ENCODE measurements at regions of chr19 and their contacts with region 1.

Region 1: DNA sequence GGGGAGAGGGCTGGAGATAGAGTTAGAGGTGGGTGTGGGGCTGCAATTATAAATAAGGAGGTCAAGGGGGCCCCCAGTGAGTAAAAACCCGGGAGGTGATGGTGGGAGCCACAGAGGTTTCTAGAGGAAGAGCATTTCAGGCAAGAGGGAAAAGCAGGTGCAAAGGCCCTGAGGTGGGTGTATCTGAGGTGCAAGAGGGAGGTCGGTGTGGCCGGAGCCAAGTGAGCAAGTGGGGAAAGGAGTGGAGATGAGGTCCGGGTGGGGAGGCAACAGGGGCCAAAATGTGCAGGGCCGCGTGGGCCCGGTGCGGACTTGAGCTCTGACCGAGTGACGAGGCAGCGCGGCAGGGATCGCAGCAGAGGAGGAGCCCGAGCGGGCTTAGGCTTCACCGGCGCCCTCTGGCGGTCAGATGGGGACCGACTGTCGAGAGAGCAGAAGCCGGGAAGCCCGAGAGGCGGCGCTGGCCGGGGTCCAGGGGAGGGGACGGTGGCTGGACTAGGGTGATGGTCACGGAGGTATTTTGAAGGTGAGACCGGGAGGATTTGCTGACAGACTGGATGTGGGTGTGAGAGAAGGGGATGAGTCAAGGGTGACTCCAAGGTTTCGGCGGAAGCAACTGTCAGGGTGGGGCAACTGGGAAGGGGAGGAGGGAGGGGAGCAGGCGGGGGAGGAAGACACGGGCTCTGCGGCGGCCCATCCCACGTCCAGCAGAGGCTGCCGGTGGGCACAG is 17.7 kb upstream of the SPACA4 start:
- DNase-seq: peak; percentile 74
- H3K4me3 ChIP-seq: peak overlapping the region in 1 of 3 experiments; percentile 3
- H3K27ac ChIP-seq: no peak overlapping the region
- H3K4me1 ChIP-seq: no peaks in the 10 kb centered on the region
- H3K27me3 ChIP-seq: no peaks in the 10 kb centered on the region
- CTCF ChIP-seq: peak; percentile 97 to 98
- POLR2A ChIP-seq: no peak

Region 2: GRCh38 chr19:48271531-48272151 is 317.2 kb before region 1 on chr19:
- CTCF ChIA-PET with region 1: interaction called, 10 read pairs
- POLR2A ChIA-PET with region 1: no interaction called
- dilution Hi-C with region 1: no loop called
- intact Hi-C with region 1: no loop called
- DNase-seq: peak; percentile 31
- H3K4me3 ChIP-seq: peak overlapping the region; percentile 23 to 53 (median 30)
- H3K27ac ChIP-seq: no peak overlapping the region
- H3K4me1 ChIP-seq: peaks cover 5% of the 10 kb centered on the region
- H3K27me3 ChIP-seq: no peaks in the 10 kb centered on the region
- CTCF ChIP-seq: no peak
- POLR2A ChIP-seq: no peak

Region 3: GRCh38 chr19:48321622-48322591 is 266.9 kb before region 1 on chr19:
- CTCF ChIA-PET with region 1: interaction called, 8 read pairs
- POLR2A ChIA-PET with region 1: no interaction called
- dilution Hi-C with region 1: no loop called
- intact Hi-C with region 1: loop called (anchors 1 kb)
- DNase-seq: peak; percentile 98
- H3K4me3 ChIP-seq: peak overlapping the region in 2 of 3 experiments; percentile 38 to 40
- H3K27ac ChIP-seq: peak overlapping the region; percentile 97
- H3K4me1 ChIP-seq: peaks cover 27% of the 10 kb centered on the region
- H3K27me3 ChIP-seq: no peaks in the 10 kb centered on the region
- CTCF ChIP-seq: no peak
- POLR2A ChIP-seq: peak; percentile 82

Region 4: GRCh38 chr19:48391107-48391986 is 197.5 kb before region 1 on chr19 and contains the start of gene KDELR1:
- CTCF ChIA-PET with region 1: interaction called, 20 read pairs
- POLR2A ChIA-PET with region 1: no interaction called
- dilution Hi-C with region 1: no loop called
- intact Hi-C with region 1: loop called (anchors 2 kb)
- DNase-seq: peak; percentile 75
- H3K4me3 ChIP-seq: peak within 1 kb of the TSS; percentile 76 to 99 (median 83)
- H3K27ac ChIP-seq: peak within 1 kb of the TSS; percentile 65
- H3K4me1 ChIP-seq: peaks cover 3% of the 10 kb centered on the region
- H3K27me3 ChIP-seq: peaks cover 16 to 33% of the 10 kb centered on the region in 2 experiments
- CTCF ChIP-seq: peak; percentile 94 to 99
- POLR2A ChIP-seq: peak; percentile 77
- total RNA-seq, gene KDELR1: 199 and 200 TPM in 2 replicates

Region 5: GRCh38 chr19:48492925-48493717 is 95.7 kb before region 1 on chr19:
- CTCF ChIA-PET with region 1: interaction called, 203 read pairs
- POLR2A ChIA-PET with region 1: interaction called, 5 read pairs
- dilution Hi-C with region 1: no loop called
- intact Hi-C with region 1: loop called (anchors 1 kb)
- DNase-seq: peak; percentile 97
- H3K4me3 ChIP-seq: peak overlapping the region; percentile 57 to 69 (median 62)
- H3K27ac ChIP-seq: no peak overlapping the region
- H3K4me1 ChIP-seq: peaks cover 16% of the 10 kb centered on the region
- H3K27me3 ChIP-seq: peaks cover 3 to 11% of the 10 kb centered on the region in 2 experiments
- CTCF ChIP-seq: no peak
- POLR2A ChIP-seq: peak; percentile 73

Region 6: DNA sequence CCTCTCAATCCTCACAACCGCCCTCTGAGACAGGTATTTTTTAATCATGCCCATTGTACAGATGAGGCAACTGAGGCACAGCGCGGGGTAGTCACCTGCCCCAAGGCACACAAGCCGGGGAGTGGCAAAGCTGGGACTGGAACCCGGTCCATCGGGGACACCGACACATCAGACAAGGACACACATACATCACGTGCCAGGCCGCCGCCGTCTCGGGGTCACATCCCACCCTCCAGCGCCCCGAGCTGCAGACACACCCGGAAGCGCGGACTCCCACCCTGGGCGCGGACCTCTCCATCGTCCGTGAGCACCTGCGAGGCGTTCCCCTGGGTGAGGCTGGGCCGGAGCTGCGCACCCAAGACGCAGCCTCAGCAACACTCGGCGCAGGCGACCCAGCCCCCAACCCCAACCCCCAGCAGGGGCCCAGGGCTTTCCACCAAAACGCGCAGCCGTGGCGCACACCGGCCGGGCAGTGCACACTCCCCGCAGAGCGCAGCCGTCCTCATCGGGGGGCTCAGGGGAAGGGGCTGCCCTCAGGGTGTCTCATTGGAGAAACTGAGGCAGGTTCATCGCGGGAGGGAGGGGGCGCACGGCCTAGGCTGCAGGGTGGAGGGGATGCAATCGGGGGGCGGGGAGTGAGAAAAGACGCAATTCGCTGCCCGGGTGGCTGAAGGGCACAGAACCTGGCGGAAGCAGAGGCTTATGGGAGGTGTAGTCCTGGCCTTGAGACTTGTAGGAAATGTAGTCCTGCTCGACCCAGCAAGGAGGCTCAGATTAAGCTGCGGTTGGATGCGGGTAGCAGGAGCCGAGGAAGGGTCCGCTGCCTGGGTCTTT is 75.3 kb before region 1 on chr19:
- CTCF ChIA-PET with region 1: interaction called, 507 read pairs
- POLR2A ChIA-PET with region 1: no interaction called
- dilution Hi-C with region 1: no loop called
- intact Hi-C with region 1: no loop called
- DNase-seq: peak; percentile 58
- H3K4me3 ChIP-seq: peak overlapping the region; percentile 50 to 70 (median 51)
- H3K27ac ChIP-seq: no peak overlapping the region
- H3K4me1 ChIP-seq: no peaks in the 10 kb centered on the region
- H3K27me3 ChIP-seq: peaks cover 12 to 14% of the 10 kb centered on the region in 2 experiments
- CTCF ChIP-seq: no peak
- POLR2A ChIP-seq: no peak

Region 7: GRCh38 chr19:48568345-48568886 is 20.4 kb before region 1 on chr19:
- CTCF ChIA-PET with region 1: interaction called, 38 read pairs
- POLR2A ChIA-PET with region 1: interaction called, 3 read pairs
- dilution Hi-C with region 1: no loop called
- intact Hi-C with region 1: no loop called
- DNase-seq: peak; percentile 83
- H3K4me3 ChIP-seq: peak overlapping the region in 1 of 3 experiments; percentile 17
- H3K27ac ChIP-seq: no peak overlapping the region
- H3K4me1 ChIP-seq: peaks cover 2% of the 10 kb centered on the region
- H3K27me3 ChIP-seq: no peaks in the 10 kb centered on the region
- CTCF ChIP-seq: no peak
- POLR2A ChIP-seq: no peak

Region 8: GRCh38 chr19:48752498-48753365 is 163.9 kb after region 1 on chr19 and contains the start of gene FUT1:
- CTCF ChIA-PET with region 1: no interaction called
- POLR2A ChIA-PET with region 1: no interaction called
- dilution Hi-C with region 1: no loop called
- intact Hi-C with region 1: no loop called
- DNase-seq: no peak
- H3K4me3 ChIP-seq: peak within 1 kb of the TSS; percentile 56 to 81 (median 65)
- H3K27ac ChIP-seq: peak within 1 kb of the TSS; percentile 5
- H3K4me1 ChIP-seq: peaks cover 11% of the 10 kb centered on the region
- H3K27me3 ChIP-seq: no peaks in the 10 kb centered on the region
- CTCF ChIP-seq: no peak
- POLR2A ChIP-seq: peak; percentile 81
- total RNA-seq, gene FUT1: 4.8 and 5.2 TPM in 2 replicates